ENCODE measurements at regions of chr20 and their contacts with region 1.

Region 1: GRCh38 chr20:31661625-31662371 is 24.1 kb downstream of the COX4I2 start:
- DNase-seq: peak; percentile 87
- ATAC-seq: peak; percentile 84
- H3K4me3 Mint-ChIP-seq: peak overlapping the region; percentile 74
- H3K27ac Mint-ChIP-seq: peak overlapping the region; percentile 79
- H3K4me1 Mint-ChIP-seq: peaks cover 23% of the 10 kb centered on the region
- H3K27me3 Mint-ChIP-seq: no peaks in the 10 kb centered on the region
- CTCF ChIP-seq: peak; percentile 88

Region 2: DNA sequence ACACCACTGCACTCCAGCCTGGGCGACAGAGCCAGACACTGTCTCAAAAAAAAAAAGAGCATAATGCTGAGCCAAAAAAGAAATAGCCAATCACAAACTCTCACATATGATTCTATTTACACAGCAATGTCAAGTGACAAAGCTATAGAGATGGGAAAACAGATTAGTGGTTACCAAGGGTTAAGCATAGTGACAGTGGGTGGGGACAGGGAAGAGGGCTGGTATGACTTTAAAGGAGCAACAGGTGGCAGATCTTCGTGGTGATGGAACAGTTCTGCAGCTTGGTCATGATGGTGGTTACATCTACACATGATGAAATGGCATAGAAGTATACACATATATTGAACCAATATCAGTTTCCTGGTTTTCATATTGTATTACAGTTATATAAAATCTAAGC is 280.0 kb before region 1 on chr20:
- CTCF ChIA-PET with region 1: no interaction called
- POLR2A ChIA-PET with region 1: no interaction called
- DNase-seq: no peak
- ATAC-seq: no peak
- H3K4me3 Mint-ChIP-seq: no peak overlapping the region
- H3K27ac Mint-ChIP-seq: no peak overlapping the region
- H3K4me1 Mint-ChIP-seq: no peaks in the 10 kb centered on the region
- H3K27me3 Mint-ChIP-seq: peaks cover 19% of the 10 kb centered on the region
- CTCF ChIP-seq: no peak

Region 3: DNA sequence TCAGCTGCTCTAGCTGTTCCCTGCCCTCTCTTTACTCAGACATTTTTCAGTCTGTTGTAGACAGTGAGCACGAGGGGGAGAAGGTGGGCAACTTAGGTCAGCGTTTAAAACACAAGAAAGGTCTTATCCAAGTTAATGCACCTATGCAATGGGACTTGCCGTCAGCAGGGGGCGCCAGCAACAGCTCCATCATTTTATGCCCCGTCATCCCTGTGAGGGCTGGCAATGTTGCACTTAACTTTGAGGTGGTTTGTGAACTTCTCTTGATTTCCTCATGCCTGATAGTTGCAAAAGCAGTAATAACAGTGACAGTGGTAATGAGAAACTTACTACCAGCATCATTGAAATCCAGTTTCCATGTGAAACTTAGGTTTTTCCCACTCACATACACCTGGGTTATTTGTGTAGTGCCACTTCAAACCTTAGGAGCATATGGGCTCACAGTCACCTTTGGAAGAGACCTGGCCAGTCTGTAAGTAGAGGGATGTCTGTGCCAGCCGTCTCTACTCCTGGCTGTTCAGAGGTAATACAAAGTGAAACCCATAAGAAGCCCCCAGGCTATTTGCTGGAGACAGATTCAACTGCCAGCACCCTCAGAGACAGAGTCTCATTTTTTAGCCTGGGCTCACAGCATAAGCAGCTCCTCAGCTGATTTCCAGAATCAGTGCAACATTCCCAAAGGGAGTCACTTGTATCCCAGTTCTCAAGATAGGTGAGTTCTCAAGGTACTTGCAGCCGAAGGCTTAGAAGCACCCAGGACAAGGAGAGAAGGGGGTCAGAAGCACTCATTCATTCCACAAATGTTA is 101.5 kb before region 1 on chr20:
- CTCF ChIA-PET with region 1: interaction called, 29 read pairs
- POLR2A ChIA-PET with region 1: interaction called, 7 read pairs
- DNase-seq: peak; percentile 77
- ATAC-seq: peak; percentile 52
- H3K4me3 Mint-ChIP-seq: no peak overlapping the region
- H3K27ac Mint-ChIP-seq: peak overlapping the region; percentile 93
- H3K4me1 Mint-ChIP-seq: peaks cover 10% of the 10 kb centered on the region
- H3K27me3 Mint-ChIP-seq: no peaks in the 10 kb centered on the region
- CTCF ChIP-seq: peak; percentile 91

Region 4: DNA sequence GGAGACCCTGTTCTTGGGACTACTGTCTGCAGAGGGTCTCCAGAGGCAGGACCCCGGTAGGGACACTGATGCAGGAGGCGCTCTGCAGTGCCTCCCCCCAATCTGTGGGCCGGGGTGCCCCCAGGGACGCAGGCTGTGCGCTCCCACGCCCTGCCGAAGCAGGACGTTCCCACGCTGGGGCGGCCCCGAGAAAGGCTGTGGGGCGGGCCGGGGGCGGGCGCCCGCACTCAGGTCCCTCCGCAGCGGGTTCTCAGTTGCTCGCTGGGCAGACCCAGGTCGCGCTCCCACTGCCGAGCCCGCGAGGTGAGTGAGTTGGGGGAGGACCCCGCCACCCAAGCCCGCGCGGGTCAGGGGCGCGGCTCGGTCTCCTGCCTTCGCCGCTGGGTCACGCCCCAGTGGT is 24.1 kb before region 1 on chr20 and contains the start of gene COX4I2:
- CTCF ChIA-PET with region 1: interaction called, 69 read pairs
- POLR2A ChIA-PET with region 1: interaction called, 5 read pairs
- DNase-seq: peak; percentile 19
- ATAC-seq: peak; percentile 35
- H3K4me3 Mint-ChIP-seq: no peak within 1 kb of the TSS
- H3K27ac Mint-ChIP-seq: no peak within 1 kb of the TSS
- H3K4me1 Mint-ChIP-seq: no peaks in the 10 kb centered on the region
- H3K27me3 Mint-ChIP-seq: no peaks in the 10 kb centered on the region; the same call in 1 of the 2 replicates
- CTCF ChIP-seq: no peak
- total RNA-seq, gene COX4I2: 0.44 TPM in 1 of 3 replicates, not detected in the others

Region 5: GRCh38 chr20:31684153-31685015 is 22.6 kb after region 1 on chr20:
- CTCF ChIA-PET with region 1: interaction called, 49 read pairs
- POLR2A ChIA-PET with region 1: no interaction called
- DNase-seq: no peak
- ATAC-seq: no peak
- H3K4me3 Mint-ChIP-seq: no peak overlapping the region
- H3K27ac Mint-ChIP-seq: peak overlapping the region; percentile 94
- H3K4me1 Mint-ChIP-seq: peaks cover 30% of the 10 kb centered on the region
- H3K27me3 Mint-ChIP-seq: no peaks in the 10 kb centered on the region
- CTCF ChIP-seq: no peak

Region 6: DNA sequence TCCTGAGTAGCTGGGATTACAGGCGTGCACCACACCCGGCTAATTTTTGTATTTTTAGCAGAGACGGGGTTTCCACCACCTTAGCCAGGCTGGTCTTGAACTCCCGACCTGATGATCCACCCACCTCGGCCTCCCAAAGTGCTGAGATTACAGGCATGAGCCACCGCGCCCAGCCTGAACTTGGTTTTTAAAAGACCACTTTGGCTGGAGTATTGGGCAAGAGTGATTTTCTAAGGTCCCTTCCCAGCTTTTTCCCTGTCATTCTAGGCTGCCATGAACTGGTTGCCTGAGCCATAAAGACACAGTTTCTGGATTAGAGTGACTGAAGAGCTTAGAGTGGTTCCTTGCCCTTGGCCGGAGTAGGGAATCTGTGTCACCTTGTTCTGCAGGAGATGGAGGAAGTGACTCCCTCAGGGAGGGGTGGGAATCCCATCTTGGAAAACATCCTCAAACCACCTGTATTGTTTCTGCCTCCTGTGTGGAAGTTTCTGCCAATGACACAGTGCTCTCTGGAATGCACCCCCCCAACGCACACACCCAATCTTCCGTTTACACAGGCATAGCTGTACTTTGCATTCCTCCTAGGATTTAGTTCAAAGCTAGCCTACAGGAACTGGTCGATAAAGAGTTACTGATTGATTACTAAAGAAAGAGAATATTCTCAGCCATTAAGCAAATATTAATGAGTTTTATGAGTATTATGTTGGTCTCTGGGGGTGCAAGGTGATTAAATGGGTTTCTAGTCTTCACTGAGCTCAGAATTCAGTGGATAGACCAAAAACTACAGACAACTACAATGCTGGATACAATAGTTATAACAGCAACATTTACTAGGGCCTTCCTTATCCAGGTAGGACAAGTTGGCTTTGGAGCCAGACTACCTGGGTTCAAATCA is 42.7 kb after region 1 on chr20:
- CTCF ChIA-PET with region 1: interaction called, 21 read pairs
- POLR2A ChIA-PET with region 1: interaction called, 8 read pairs
- DNase-seq: peak; percentile 35
- ATAC-seq: peak; percentile 57
- H3K4me3 Mint-ChIP-seq: no peak overlapping the region
- H3K27ac Mint-ChIP-seq: peak overlapping the region; percentile 70
- H3K4me1 Mint-ChIP-seq: peaks cover 49% of the 10 kb centered on the region
- H3K27me3 Mint-ChIP-seq: no peaks in the 10 kb centered on the region
- CTCF ChIP-seq: no peak

Region 7: GRCh38 chr20:31738729-31739561 is 77.1 kb after region 1 on chr20 and contains the start of gene TPX2:
- CTCF ChIA-PET with region 1: interaction called, 22 read pairs
- POLR2A ChIA-PET with region 1: interaction called, 4 read pairs
- DNase-seq: peak; percentile 94
- ATAC-seq: peak; percentile 99
- H3K4me3 Mint-ChIP-seq: no peak within 1 kb of the TSS
- H3K27ac Mint-ChIP-seq: no peak within 1 kb of the TSS
- H3K4me1 Mint-ChIP-seq: no peaks in the 10 kb centered on the region
- H3K27me3 Mint-ChIP-seq: peaks cover 4% of the 10 kb centered on the region
- CTCF ChIP-seq: no peak
- total RNA-seq, gene TPX2: 113 to 123 TPM (median 115 TPM) in 3 replicates

Region 8: GRCh38 chr20:31770243-31770642 is 108.4 kb after region 1 on chr20:
- CTCF ChIA-PET with region 1: no interaction called
- POLR2A ChIA-PET with region 1: no interaction called
- DNase-seq: no peak
- ATAC-seq: no peak
- H3K4me3 Mint-ChIP-seq: no peak overlapping the region
- H3K27ac Mint-ChIP-seq: no peak overlapping the region
- H3K4me1 Mint-ChIP-seq: no peaks in the 10 kb centered on the region
- H3K27me3 Mint-ChIP-seq: no peaks in the 10 kb centered on the region
- CTCF ChIP-seq: no peak

Measured in WTC11 (cell line).